ENCODE measurements at regions of chr17 and their contacts with region 1.

Region 1: DNA sequence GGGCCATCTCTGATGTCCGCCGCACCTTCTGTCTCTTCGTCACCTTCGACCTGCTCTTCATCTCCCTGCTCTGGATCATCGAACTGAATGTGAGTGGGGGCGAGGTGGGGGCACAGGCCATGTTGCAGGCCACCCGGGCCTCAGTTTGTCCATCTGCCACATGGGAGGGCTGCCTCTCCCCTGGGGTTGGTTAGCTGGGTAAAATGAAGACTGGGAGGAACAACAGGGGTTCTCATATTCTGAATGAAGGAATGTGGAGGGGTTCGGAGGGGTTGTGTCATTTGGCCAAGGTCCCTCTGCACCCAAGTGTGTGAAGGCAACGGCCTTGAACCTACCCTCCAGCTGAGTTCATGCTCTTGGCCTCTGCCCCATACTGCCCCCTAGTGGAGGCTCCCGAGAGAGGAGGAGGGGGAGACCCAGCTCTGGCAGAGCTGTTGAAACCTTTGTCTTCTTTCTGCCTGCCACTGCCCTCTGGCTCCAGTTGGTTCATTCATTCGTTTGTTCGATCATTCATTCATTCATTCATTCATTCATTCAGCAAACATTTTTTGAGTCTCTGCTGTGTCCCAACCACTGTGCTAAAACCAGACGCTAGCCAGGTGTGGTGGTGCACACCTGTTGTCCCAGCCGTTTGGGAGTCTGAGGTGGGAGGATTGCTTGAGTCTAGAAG is 11.4 kb upstream of the TCAP start:
- DNase-seq: peak in 1 of 2 experiments; percentile 97
- H3K4me3 ChIP-seq: no peak overlapping the region
- H3K27ac ChIP-seq: no peak overlapping the region
- H3K4me1 ChIP-seq: peaks cover 5 to 26% (median 21%) of the 10 kb centered on the region in 4 experiments
- H3K27me3 ChIP-seq: no peaks in the 10 kb centered on the region
- CTCF ChIP-seq: peak; percentile 88 to 95 (median 94)
- EP300 ChIP-seq: no peak
- POLR2A ChIP-seq: no peak
- RAD21 ChIP-seq: peak; percentile 56 to 74

Region 2: DNA sequence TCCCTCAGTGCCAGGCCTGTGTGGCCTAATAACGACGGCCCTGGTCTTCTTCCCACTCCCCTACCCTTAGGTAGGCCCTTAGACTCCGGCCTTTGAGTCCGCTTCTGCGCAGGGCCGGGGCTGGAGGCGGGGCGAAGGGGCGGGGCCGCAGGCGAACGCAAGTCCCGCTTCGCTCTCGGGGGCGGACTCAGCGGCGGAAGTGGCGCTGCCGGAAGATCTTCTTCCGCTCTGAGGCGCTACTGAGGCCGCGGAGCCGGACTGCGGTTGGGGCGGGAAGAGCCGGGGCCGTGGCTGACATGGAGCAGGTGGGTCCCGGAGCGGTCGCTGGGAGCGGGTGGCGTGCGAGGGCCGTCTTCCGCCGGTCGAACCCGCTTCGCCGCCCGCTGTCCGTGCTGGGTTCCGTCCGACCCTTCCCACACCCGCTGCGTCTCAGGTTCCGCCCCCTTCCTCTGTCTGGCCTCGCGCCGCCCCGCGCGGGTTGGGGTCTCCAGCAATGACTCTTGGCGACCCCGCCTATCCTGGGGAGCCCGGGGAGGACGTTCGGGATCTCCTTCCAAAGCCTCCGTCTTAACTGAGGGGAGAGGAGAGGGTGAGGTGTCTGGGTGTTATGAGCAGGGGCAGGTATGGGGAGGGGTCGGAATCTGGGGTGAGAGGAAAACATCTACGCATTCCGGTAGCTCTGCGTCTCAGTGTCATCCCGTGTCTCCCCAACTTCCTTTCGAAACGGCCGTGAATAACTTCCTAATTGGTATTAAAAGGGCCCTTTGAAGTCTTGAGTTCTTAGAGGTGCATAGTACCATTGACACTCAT is 16.7 kb before region 1 on chr17 and contains the start of gene STARD3:
- CTCF ChIA-PET with region 1: interaction called, 1,096 read pairs
- POLR2A ChIA-PET with region 1: interaction called, 28 read pairs
- DNase-seq: peak in 1 of 2 experiments; percentile 92
- H3K4me3 ChIP-seq: peak within 1 kb of the TSS; percentile 79 to 91 (median 85)
- H3K27ac ChIP-seq: peak within 1 kb of the TSS; percentile 64; the same call in 1 of the 2 replicates
- H3K4me1 ChIP-seq: peaks cover 13 to 40% (median 26%) of the 10 kb centered on the region in 4 experiments
- H3K27me3 ChIP-seq: 0 out of 7 replicates have a peak, but pooled peaks cover 0 to 3% (median 0%) of the 10 kb centered on the region in 4 experiments
- CTCF ChIP-seq: peak in 2 of 3 experiments; percentile 18 to 32; a peak in 3 of 4 replicates
- EP300 ChIP-seq: 0 out of 3 replicates have a peak, but pooled peaks of 1 of the 2 experiments have one; percentile 22
- POLR2A ChIP-seq: peak in 1 of 2 experiments; percentile 61; a peak in 2 of 3 replicates
- RAD21 ChIP-seq: 0 out of 4 replicates have a peak, but pooled peaks of 1 of the 2 experiments have one; percentile 6
- total RNA-seq, gene STARD3: 47.6 and 56.7 TPM in 2 replicates

Region 3: DNA sequence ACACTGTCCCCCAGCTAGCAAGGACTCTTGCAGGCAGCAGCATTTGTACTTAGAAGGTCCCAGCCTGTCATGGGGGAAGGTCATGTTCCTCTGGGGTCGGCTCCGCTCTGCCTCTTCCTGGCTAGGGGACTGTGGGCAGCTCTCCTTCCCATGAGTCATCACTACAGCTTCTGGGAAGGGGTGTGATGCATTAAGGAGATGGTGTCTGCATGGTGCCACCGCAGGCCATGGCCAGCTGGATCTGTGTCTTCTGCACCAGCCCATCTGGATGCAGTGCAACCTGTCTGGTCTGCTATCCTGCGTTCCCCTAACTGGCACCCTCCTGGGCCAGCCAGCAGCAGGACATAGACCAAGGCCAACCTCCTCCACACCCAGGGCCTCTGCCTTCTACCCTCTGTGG is 10.5 kb before region 1 on chr17:
- CTCF ChIA-PET with region 1: interaction called, 133 read pairs
- POLR2A ChIA-PET with region 1: interaction called, 28 read pairs
- DNase-seq: no peak
- H3K4me3 ChIP-seq: no peak overlapping the region
- H3K27ac ChIP-seq: no peak overlapping the region
- H3K4me1 ChIP-seq: peaks cover 7 to 21% (median 12%) of the 10 kb centered on the region in 4 experiments
- H3K27me3 ChIP-seq: no peaks in the 10 kb centered on the region
- CTCF ChIP-seq: no peak
- EP300 ChIP-seq: no peak
- POLR2A ChIP-seq: no peak
- RAD21 ChIP-seq: no peak